Heart left ventricle (tissue), 16 donors: ENCODE measurements at regions of chr2 and their contacts with region 1.

Region 1: DNA sequence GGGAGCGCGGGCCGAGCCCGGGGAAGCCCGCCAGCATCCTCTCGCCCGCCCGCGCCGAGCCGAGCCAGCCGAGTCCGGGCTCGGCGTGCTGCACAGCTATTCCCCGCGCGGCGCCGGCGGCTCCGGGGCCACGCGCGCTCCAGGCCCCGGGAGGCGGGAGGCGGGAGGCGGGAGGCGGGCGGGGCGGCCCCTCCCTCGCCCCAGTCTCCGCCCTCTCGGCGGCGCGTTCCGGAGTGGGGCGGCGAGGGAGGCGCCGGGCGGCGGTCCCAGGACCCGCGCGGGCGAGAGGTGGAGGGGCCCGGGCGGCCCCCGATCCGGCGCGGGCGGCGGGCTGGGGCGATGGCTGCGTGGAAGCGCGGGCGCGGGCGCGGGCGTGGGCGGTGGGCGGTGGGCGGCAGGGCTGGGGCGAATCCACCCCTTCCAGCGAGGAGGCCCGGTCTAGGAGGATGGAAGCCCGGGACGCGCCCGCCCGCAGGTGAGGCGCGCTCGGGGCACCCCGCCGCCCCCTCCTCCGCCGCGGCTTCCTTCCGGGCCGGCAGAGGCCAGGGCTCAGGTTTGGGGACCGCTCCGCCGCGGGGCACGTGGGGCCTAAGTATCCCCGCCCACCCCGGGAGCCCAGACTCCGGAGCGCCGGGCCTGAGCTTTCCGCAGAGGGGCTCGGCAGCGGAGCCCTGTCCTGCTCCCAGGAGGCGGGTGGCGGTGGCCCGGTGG is at the start of gene ADCY3:
- DNase-seq: peak in 4 of 5 donors; percentile 53 to 83 (median 60)
- ATAC-seq: peak in 3 of 4 donors; percentile 54 to 72 (median 64)
- H3K4me3 ChIP-seq: peak within 1 kb of the TSS; percentile 36 to 88 (median 64)
- H3K27ac ChIP-seq: peak within 1 kb of the TSS; percentile 19 to 80 (median 53)
- H3K4me1 ChIP-seq: peaks cover 0 to 29% (median 5%) of the 10 kb centered on the region in 12 donors
- H3K27me3 ChIP-seq: no peaks in the 10 kb centered on the region
- CTCF ChIP-seq: no peak
- POLR2A ChIP-seq: no peak
- total RNA-seq, gene ADCY3: 9.3 to 36.0 (median 17.5) TPM

Region 2: GRCh38 chr2:24409700-24410556 is 510.3 kb before region 1 on chr2:
- intact Hi-C with region 1: loop called in 1 of 10 experiments (anchors 10 kb)
- DNase-seq: peak in 2 of 5 donors; percentile 20 to 27
- ATAC-seq: peak in 3 of 4 donors; percentile 73 to 89 (median 78)
- H3K4me3 ChIP-seq: no peak overlapping the region
- H3K27ac ChIP-seq: no peak overlapping the region
- H3K4me1 ChIP-seq: no peaks in the 10 kb centered on the region
- H3K27me3 ChIP-seq: peaks cover 0 to 14% (median 0%) of the 10 kb centered on the region in 9 donors
- CTCF ChIP-seq: peak; percentile 74 to 92 (median 82)
- POLR2A ChIP-seq: no peak

Region 3: GRCh38 chr2:24672589-24672988 is 247.7 kb before region 1 on chr2:
- intact Hi-C with region 1: no loop called
- DNase-seq: no peak
- ATAC-seq: no peak
- H3K4me3 ChIP-seq: no peak overlapping the region
- H3K27ac ChIP-seq: no peak overlapping the region
- H3K4me1 ChIP-seq: peaks cover 0 to 18% (median 6%) of the 10 kb centered on the region in 12 donors
- H3K27me3 ChIP-seq: no peaks in the 10 kb centered on the region
- CTCF ChIP-seq: no peak
- POLR2A ChIP-seq: no peak

Region 4: DNA sequence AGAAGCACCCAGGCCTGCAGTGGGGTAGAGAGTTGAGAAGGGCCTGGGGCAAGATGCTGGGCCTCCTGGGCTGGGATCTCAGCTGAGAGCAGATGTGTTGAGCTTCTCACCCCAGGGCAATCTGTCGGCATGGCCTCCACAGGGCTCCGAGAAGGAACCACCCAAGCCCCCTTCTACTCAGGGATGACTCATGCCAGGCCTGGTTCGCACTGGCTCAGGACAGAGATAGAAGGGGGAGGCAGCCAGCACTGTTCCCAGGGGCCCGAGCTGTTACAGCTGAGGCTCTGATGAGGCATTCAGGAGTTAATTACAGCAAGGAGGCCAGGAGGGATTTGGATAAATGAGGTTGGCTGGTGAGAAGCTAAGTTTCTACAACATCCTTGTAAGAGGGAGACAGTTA is 64.5 kb before region 1 on chr2:
- intact Hi-C with region 1: loop called in 2 of 10 experiments (anchors 2 to 5 kb)
- DNase-seq: peak in 2 of 5 donors; percentile 50 to 75
- ATAC-seq: peak in 3 of 4 donors; percentile 43 to 82 (median 69)
- H3K4me3 ChIP-seq: no peak overlapping the region
- H3K27ac ChIP-seq: peak overlapping the region; percentile 48 to 89 (median 75)
- H3K4me1 ChIP-seq: peaks cover 0 to 46% (median 14%) of the 10 kb centered on the region in 12 donors
- H3K27me3 ChIP-seq: no peaks in the 10 kb centered on the region
- CTCF ChIP-seq: no peak
- POLR2A ChIP-seq: no peak